HepG2 (cell line): ENCODE measurements at regions of chr11 and their contacts with region 1.

Region 1: DNA sequence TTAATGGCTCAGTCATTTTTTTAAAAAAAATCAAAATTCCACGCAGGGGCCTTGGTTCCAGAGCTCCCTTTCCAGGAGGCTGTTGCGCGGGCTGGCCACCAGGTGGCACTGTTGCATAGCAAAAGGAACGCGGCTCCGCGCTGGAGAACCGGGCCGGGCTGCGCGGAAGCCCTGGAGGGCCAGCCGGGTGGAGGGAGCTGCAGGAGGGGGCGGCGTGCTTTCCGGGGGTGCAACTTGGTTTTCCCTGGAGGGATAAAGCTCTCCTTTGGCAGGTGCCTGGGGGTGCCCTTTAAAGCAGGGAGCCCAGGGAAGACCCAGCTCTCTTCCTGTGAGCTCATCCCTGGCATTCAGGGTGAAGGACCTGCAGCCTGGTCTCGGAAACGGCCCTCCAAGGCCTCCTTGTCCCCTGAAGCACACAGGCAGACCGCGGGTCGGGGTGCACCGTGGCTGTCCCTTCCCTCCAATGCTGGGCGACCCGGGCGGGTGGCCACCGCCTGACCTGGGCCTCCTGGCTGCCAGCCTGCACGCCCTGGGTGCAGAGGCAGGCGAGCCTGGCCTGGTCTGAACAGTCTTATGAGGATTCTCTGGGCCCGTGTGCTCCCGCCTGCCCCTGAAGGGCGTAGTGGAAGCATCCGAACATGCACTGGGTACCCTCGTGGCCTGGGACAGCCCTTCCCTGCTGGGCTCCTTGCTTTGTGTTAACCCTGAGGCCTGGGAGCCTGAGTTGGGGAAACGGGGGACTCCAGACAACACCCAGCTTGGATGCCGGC is 23.4 kb downstream of the KRTAP5-5 start:
- DNase-seq: peak; percentile 35
- ATAC-seq: peak; percentile 85
- H3K4me3 ChIP-seq: no peak overlapping the region; a peak in 1 of 6 replicates
- H3K27ac ChIP-seq: peak overlapping the region; percentile 44
- H3K4me1 ChIP-seq: peaks cover 73% of the 10 kb centered on the region
- H3K27me3 ChIP-seq: peaks cover 0 to 7% of the 10 kb centered on the region in 2 experiments; a peak in 2 of 5 replicates
- CTCF ChIP-seq: peak; percentile 96
- EP300 ChIP-seq: no peak
- POLR2A ChIP-seq: no peak
- RAD21 ChIP-seq: peak; percentile 97

Region 2: DNA sequence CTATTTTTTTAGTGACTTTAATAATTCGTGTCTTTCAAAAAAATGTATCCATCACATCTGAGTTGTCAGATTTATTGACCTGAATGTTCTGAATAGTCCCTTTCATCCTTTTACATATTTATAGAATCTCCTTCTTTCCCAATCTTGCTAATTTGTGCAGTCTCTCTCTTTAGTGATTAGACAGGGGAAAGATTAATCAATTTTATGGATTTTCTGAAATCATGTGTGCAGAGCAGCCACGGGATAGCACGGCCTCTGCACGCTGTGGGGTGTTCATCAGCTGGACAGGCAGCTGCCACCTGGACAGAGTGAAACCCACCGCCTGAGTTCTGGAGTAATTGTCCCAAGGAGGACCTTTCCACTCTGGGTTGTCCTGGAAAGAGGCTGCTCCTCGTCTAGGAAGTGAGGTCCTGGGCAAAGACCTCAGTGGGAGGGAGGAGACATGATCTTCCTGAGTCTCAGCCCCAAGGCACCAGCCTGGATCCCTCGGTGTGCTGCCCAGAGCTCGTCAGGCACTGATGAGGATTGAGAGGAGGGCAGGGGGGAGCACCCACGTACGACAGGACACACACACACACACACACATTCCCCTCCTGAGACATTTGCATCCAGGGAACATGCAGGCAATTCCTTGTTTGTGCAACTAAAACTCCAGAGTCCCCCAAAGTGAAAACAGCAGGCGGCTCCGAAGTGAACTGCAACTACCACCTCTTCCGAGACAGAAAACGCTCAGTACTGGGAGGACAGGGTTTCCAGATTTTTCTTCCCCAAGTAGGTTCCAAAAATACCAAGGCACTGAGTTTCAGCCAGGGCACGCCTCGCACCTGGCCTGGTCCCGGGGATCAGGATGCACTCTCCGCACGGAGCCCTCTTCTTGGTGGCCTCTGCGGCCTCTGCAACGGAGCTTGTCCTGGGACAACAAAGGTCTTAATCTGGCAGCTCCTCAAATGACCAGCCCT is 21.5 kb after region 1 on chr11:
- CTCF ChIA-PET with region 1: no interaction called
- POLR2A ChIA-PET with region 1: interaction called, 10 read pairs
- in situ Hi-C with region 1: no loop called
- intact Hi-C with region 1: no loop called
- DNase-seq: no peak
- ATAC-seq: peak; percentile 71
- H3K4me3 ChIP-seq: peak overlapping the region in 1 of 3 experiments; percentile 38; a peak in 2 of 6 replicates
- H3K27ac ChIP-seq: peak overlapping the region; percentile 95
- H3K4me1 ChIP-seq: peaks cover 93% of the 10 kb centered on the region
- H3K27me3 ChIP-seq: no peaks in the 10 kb centered on the region
- CTCF ChIP-seq: no peak
- EP300 ChIP-seq: no peak
- POLR2A ChIP-seq: peak in 1 of 2 experiments; percentile 51; a peak in 2 of 4 replicates
- RAD21 ChIP-seq: no peak

Region 3: DNA sequence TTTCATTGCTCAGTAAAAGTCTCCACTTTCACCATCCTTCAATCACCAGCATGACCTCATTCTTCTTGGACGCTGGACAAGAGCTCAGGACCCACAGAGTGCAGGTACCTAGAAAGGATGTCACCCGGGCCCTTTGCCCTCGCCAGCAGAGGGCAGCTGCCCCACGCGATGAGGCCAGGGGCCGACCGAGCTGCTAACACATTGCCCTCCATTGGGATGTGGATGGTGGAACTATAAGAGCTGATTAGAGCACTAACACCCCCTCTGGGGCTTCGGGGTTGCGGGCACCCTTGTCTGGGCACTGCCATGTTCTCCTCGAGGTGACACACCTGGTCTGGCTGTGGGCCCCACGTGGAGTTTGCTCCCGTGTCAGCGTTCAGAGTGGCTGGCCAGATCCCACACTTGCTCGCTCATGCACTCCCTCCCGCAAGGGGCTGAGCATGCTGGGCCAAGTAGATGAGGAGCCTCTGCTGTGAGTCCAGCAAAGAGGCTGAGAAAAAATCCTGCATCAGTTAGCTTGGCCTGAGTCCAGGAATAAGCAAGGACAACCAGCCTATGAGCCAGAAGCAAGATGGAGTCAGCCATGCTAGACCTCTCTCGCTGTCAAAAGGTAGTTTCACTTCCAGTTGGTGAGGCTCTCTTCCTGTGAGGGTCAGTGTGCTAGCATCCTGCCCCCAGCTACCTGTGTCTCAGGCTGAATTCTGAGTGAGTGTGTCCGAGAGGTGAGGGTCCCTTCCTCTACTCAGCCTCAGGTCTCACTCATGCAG is 53.9 kb after region 1 on chr11:
- CTCF ChIA-PET with region 1: no interaction called
- POLR2A ChIA-PET with region 1: no interaction called
- in situ Hi-C with region 1: no loop called
- intact Hi-C with region 1: no loop called
- DNase-seq: no peak
- ATAC-seq: peak; percentile 65
- H3K4me3 ChIP-seq: no peak overlapping the region
- H3K27ac ChIP-seq: no peak overlapping the region
- H3K4me1 ChIP-seq: no peaks in the 10 kb centered on the region
- H3K27me3 ChIP-seq: peaks cover 5 to 24% of the 10 kb centered on the region in 2 experiments; a peak in 4 of 5 replicates
- CTCF ChIP-seq: peak; percentile 59
- EP300 ChIP-seq: no peak
- POLR2A ChIP-seq: no peak
- RAD21 ChIP-seq: no peak

Region 4: GRCh38 chr11:1827095-1827813 is 174.3 kb after region 1 on chr11:
- CTCF ChIA-PET with region 1: interaction called, 37 read pairs
- POLR2A ChIA-PET with region 1: interaction called, 26 read pairs
- in situ Hi-C with region 1: loop called (anchors 5 kb)
- intact Hi-C with region 1: loop called (anchors 2 kb)
- DNase-seq: peak; percentile 70
- ATAC-seq: peak; percentile 14
- H3K4me3 ChIP-seq: peak overlapping the region in 1 of 3 experiments; percentile 32; a peak in 1 of 6 replicates
- H3K27ac ChIP-seq: no peak overlapping the region
- H3K4me1 ChIP-seq: peaks cover 78% of the 10 kb centered on the region
- H3K27me3 ChIP-seq: peaks cover 0 to 2% of the 10 kb centered on the region in 2 experiments; a peak in 1 of 5 replicates
- CTCF ChIP-seq: peak; percentile 23; the same call in 1 of the 2 replicates
- EP300 ChIP-seq: no peak
- POLR2A ChIP-seq: no peak
- RAD21 ChIP-seq: no peak